HEK293 (cell line): ENCODE measurements at regions of chr17 and their contacts with region 1.

Region 1: GRCh38 chr17:17919169-17920107 is 52.8 kb downstream of the TOM1L2 start:
- H3K4me3 ChIP-seq: no peak overlapping the region
- H3K27ac ChIP-seq: peak overlapping the region; percentile 35; the same call in 1 of the 2 replicates
- H3K4me1 ChIP-seq: peaks cover 34% of the 10 kb centered on the region
- CTCF ChIP-seq: peak; percentile 85

Region 2: GRCh38 chr17:17812211-17813057 is 107.0 kb before region 1 on chr17:
- CTCF ChIA-PET with region 1: interaction called, 22 read pairs
- POLR2A ChIA-PET with region 1: no interaction called
- H3K4me3 ChIP-seq: no peak overlapping the region
- H3K27ac ChIP-seq: peak overlapping the region; percentile 52; the same call in 1 of the 2 replicates
- H3K4me1 ChIP-seq: peaks cover 6% of the 10 kb centered on the region
- CTCF ChIP-seq: peak; percentile 92

Region 3: DNA sequence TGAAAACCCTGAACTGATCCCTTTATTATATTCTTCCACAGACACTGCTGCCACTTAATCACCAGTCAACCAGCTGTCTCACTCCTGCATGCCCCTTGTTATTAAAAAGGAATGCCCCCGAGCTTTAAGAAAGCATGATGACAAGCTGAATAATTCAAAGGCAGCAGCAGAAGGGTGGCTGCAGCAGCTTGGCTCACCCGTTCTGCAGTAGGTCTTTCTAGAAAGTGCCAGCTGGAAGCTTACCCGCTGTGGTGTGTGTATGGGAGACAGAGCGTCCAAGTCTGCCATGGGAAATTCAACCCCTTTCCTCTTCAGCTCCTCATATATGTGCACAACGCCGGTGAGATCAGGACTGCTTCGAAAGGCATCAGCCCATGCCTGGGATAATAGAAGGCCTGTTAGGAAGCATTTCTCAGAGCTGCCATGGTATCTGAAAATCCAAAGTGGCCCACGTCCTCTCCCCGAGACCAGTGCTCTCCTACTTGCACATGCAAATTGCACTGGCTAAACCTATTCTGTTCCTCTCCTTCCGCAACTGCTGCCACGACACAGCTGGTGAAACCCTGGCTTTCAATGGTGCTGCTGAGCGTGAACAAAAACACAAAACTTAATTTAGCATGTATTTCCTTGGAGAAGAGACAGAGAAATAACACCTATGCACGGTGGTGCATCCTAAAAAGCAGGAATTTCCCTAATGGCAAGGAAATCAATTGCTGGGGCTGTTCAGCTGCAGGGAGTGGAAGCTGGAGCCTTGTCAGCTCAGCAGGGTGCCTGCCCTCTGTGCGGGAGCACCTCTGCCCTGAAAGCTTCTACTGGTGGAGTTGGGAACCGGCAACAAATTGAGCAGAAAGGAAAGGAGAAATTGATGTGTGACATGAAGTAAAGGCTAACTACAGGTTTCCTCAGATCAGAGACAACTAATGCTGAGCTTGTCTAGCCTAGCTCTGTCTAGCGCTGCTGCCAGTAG is 34.8 kb before region 1 on chr17:
- CTCF ChIA-PET with region 1: interaction called, 34 read pairs
- POLR2A ChIA-PET with region 1: no interaction called
- H3K4me3 ChIP-seq: no peak overlapping the region
- H3K27ac ChIP-seq: no peak overlapping the region
- H3K4me1 ChIP-seq: peaks cover 2% of the 10 kb centered on the region; the same call in 1 of the 2 replicates
- CTCF ChIP-seq: no peak

Region 4: GRCh38 chr17:17906418-17907215 is 12.8 kb before region 1 on chr17:
- CTCF ChIA-PET with region 1: interaction called, 48 read pairs
- POLR2A ChIA-PET with region 1: interaction called, 8 read pairs
- H3K4me3 ChIP-seq: no peak overlapping the region
- H3K27ac ChIP-seq: no peak overlapping the region
- H3K4me1 ChIP-seq: no peaks in the 10 kb centered on the region; the same call in 1 of the 2 replicates
- CTCF ChIP-seq: no peak

Region 5: DNA sequence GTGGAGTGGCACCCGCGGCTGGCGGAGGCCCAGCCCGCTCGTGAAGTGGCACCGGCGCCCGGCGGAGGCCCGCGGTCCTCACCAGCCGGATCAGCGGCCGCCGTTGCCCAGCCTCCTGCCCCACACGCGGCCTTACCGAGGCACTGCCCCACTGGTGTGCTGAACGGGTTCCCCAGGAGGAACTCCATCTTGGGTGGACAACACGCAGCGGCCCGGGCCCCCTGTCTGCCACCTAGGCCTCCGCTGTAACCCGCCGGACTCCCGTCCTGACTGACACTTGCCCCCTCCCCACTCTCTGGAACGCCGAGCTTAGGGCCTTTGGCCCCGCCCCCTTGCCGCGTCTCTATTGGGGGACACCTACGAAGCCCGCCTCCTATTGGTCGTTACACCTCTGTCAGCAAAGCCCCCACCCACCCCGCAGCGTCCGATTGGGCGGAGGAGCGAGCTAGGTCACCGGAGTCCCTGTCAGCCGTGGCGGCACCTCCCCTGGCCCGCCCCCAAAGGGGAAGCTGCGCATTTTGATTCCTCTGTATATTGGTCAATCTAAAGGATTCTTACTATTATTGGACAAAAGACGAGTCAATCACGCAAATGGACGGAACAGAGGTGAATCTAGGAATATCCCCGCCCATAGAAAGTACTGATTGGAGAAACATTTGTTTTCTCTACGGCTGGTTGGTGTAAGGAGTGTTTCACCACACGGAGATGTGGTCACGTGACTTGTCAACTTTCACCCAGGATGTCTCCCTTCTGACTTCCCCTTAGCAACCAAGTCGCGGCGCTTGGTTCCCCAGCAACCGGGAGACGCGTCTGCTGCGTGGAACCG is 52.9 kb after region 1 on chr17 and contains the starts of genes DRC3 and TOM1L2:
- CTCF ChIA-PET with region 1: interaction called, 8 read pairs
- POLR2A ChIA-PET with region 1: interaction called, 17 read pairs
- H3K4me3 ChIP-seq: peak within 1 kb of the TSS; percentile 82
- H3K27ac ChIP-seq: no peak within 1 kb of the TSS
- H3K4me1 ChIP-seq: peaks cover 17% of the 10 kb centered on the region
- CTCF ChIP-seq: no peak